ENCODE measurements at regions of chr2 and their contacts with region 1.

Region 1: GRCh38 chr2:16218625-16219024 is 278.3 kb downstream of the MYCN start:
- DNase-seq: no peak
- H3K4me3 ChIP-seq: no peak overlapping the region
- H3K4me3 Mint-ChIP-seq: no peak overlapping the region
- H3K27ac ChIP-seq: no peak overlapping the region
- H3K27ac Mint-ChIP-seq: no peak overlapping the region
- H3K4me1 ChIP-seq: no peaks in the 10 kb centered on the region
- H3K4me1 Mint-ChIP-seq: no peaks in the 10 kb centered on the region
- H3K27me3 ChIP-seq: no peaks in the 10 kb centered on the region
- H3K27me3 Mint-ChIP-seq: peaks cover 0 to 3% of the 10 kb centered on the region in 2 donors

Region 2: DNA sequence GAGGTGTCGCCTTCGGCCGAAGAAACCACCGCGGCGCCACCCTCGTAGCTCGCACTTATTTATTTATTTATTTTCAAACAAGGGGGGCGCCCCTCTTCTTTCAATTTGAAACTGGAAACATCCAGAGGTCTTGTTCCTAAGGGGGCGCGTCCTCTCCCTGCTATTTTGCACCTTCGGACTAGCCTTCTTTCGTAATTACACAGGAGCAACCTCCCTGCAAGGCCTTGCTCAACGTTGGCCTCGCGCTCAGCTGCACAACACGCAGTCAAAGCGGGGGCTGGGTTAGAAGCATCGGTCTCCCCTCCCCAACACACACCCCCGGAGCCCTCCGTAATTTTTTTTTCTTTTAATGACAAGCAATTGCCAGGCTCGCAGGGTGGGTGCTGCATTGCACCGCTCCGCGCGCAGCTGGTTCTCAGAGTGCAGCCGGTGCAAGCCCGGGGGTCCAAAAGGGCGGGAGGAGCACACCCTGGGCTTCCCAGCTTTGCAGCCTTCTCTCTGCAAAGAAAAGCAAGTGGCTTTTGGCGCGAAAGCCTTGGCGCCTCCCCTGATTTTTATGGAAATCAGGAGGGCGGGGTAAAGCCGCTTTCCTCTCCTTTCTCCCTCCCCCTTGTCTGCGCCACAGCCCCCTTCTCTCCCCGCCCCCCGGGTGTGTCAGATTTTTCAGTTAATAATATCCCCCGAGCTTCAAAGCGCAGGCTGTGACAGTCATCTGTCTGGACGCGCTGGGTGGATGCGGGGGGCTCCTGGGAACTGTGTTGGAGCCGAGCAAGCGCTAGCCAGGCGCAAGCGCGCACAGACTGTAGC is 278.6 kb before region 1 on chr2 and contains the start of gene MYCN:
- CTCF ChIA-PET with region 1: interaction called, 5 read pairs
- POLR2A ChIA-PET with region 1: no interaction called
- intact Hi-C with region 1: loop called (anchors 10 kb)
- DNase-seq: peak in 4 of 5 donors; percentile 14 to 20 (median 17)
- H3K4me3 ChIP-seq: peak within 1 kb of the TSS in 1 of 2 donors; percentile 19
- H3K4me3 Mint-ChIP-seq: peak within 1 kb of the TSS; percentile 58 to 83 (median 73)
- H3K27ac ChIP-seq: no peak within 1 kb of the TSS
- H3K27ac Mint-ChIP-seq: no peak within 1 kb of the TSS
- H3K4me1 ChIP-seq: peaks cover 28% of the 10 kb centered on the region
- H3K4me1 Mint-ChIP-seq: peaks cover 7 to 36% (median 25%) of the 10 kb centered on the region in 4 donors
- H3K27me3 ChIP-seq: peaks cover 4% of the 10 kb centered on the region
- H3K27me3 Mint-ChIP-seq: peaks cover 40 to 46% of the 10 kb centered on the region in 2 donors
- total RNA-seq, gene MYCN: 0.15 TPM in 1 of 2 experiments, not detected in the other

Measured in CD4-positive, alpha-beta memory T cell (primary cell).